ENCODE measurements at regions of chr10 and their contacts with region 1.

Region 1: GRCh38 chr10:69968830-69969229 is 83.8 kb upstream of the MACROH2A2 start:
- DNase-seq: peak in 1 of 2 experiments; percentile 65
- H3K4me3 ChIP-seq: no peak overlapping the region
- H3K4me3 Mint-ChIP-seq: no peak overlapping the region
- H3K27ac Mint-ChIP-seq: no peak overlapping the region
- H3K4me1 ChIP-seq: no peaks in the 10 kb centered on the region
- H3K4me1 Mint-ChIP-seq: no peaks in the 10 kb centered on the region
- H3K27me3 ChIP-seq: peaks cover 2% of the 10 kb centered on the region
- H3K27me3 Mint-ChIP-seq: peaks cover 34% of the 10 kb centered on the region
- CTCF ChIP-seq: peak; percentile 32 to 79

Region 2: GRCh38 chr10:70101668-70102067 is 132.8 kb after region 1 on chr10:
- CTCF ChIA-PET with region 1: no interaction called
- POLR2A ChIA-PET with region 1: no interaction called
- intact Hi-C with region 1: loop called (anchors 2 kb)
- DNase-seq: no peak
- H3K4me3 ChIP-seq: no peak overlapping the region
- H3K4me3 Mint-ChIP-seq: no peak overlapping the region
- H3K27ac Mint-ChIP-seq: no peak overlapping the region
- H3K4me1 ChIP-seq: peaks cover 6% of the 10 kb centered on the region; the same call in 1 of the 2 replicates
- H3K4me1 Mint-ChIP-seq: peaks cover 6% of the 10 kb centered on the region
- H3K27me3 ChIP-seq: no peaks in the 10 kb centered on the region
- H3K27me3 Mint-ChIP-seq: no peaks in the 10 kb centered on the region
- CTCF ChIP-seq: no peak

Measured in Caco-2 (cell line).